ENCODE measurements at regions of chr13 and their contacts with region 1.

Region 1: GRCh38 chr13:41132512-41133152 is at the start of gene KBTBD6:
- DNase-seq: peak; percentile 97
- H3K4me3 ChIP-seq: peak within 1 kb of the TSS; percentile 84
- H3K27ac ChIP-seq: peak within 1 kb of the TSS; percentile 36
- H3K4me1 ChIP-seq: peaks cover 39% of the 10 kb centered on the region
- CTCF ChIP-seq: no peak
- total RNA-seq, gene KBTBD6: 11.1 and 11.6 TPM in 2 replicates

Region 2: DNA sequence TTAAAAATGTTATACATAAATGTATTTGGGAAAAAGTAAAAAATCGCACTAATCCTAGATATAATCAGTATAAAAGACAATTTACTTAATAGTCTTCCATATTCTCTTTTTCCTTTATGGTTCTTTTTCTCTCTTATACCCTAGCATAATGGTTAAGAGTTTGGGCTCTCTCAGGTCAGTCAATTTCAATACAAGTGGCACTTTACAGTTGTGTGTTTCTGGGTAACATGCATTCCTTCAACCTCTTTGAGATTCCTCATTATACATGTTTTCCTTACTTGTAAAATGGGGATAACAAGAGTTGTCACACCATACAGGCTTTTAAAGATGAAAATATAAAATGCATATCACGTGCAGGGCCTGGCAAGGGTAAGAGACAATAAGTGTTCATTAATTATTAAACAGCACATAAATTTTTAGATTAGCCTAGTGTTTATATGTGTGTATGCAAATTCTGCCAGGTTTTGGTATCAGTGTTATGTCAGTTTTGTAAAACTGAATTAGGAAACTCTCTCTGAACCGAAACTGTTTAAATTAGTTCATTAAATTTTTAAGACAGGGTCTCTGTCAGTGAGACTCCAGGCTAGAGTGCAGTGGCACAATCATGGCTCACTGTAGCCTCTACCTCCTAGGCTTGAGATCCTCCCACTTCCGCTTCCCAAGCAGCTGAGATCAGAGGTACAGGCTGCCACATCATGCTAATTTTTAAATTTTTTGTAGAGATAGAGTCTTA is 163.3 kb before region 1 on chr13:
- CTCF ChIA-PET with region 1: no interaction called
- POLR2A ChIA-PET with region 1: no interaction called
- intact Hi-C with region 1: no loop called
- DNase-seq: peak; percentile 50
- H3K4me3 ChIP-seq: peak overlapping the region; percentile 85
- H3K27ac ChIP-seq: peak overlapping the region; percentile 32
- H3K4me1 ChIP-seq: peaks cover 100% of the 10 kb centered on the region
- CTCF ChIP-seq: no peak

Region 3: GRCh38 chr13:41193919-41194824 is 61.5 kb after region 1 on chr13 and contains the start of gene KBTBD7:
- CTCF ChIA-PET with region 1: no interaction called
- POLR2A ChIA-PET with region 1: no interaction called
- intact Hi-C with region 1: loop called (anchors 1 kb)
- DNase-seq: peak; percentile 87
- H3K4me3 ChIP-seq: peak within 1 kb of the TSS; percentile 70
- H3K27ac ChIP-seq: no peak within 1 kb of the TSS
- H3K4me1 ChIP-seq: peaks cover 5% of the 10 kb centered on the region
- CTCF ChIP-seq: no peak
- total RNA-seq, gene KBTBD7: 4.8 and 6.5 TPM in 2 replicates

Region 4: GRCh38 chr13:41263261-41264027 is 130.8 kb after region 1 on chr13 and contains the start of gene MTRF1:
- CTCF ChIA-PET with region 1: no interaction called
- POLR2A ChIA-PET with region 1: interaction called, 3 read pairs
- intact Hi-C with region 1: loop called (anchors 5 kb)
- DNase-seq: peak; percentile 89
- H3K4me3 ChIP-seq: peak within 1 kb of the TSS; percentile 80
- H3K27ac ChIP-seq: peak within 1 kb of the TSS; percentile 60
- H3K4me1 ChIP-seq: peaks cover 7% of the 10 kb centered on the region
- CTCF ChIP-seq: no peak
- total RNA-seq, gene MTRF1: 22.1 and 24.9 TPM in 2 replicates

Region 5: DNA sequence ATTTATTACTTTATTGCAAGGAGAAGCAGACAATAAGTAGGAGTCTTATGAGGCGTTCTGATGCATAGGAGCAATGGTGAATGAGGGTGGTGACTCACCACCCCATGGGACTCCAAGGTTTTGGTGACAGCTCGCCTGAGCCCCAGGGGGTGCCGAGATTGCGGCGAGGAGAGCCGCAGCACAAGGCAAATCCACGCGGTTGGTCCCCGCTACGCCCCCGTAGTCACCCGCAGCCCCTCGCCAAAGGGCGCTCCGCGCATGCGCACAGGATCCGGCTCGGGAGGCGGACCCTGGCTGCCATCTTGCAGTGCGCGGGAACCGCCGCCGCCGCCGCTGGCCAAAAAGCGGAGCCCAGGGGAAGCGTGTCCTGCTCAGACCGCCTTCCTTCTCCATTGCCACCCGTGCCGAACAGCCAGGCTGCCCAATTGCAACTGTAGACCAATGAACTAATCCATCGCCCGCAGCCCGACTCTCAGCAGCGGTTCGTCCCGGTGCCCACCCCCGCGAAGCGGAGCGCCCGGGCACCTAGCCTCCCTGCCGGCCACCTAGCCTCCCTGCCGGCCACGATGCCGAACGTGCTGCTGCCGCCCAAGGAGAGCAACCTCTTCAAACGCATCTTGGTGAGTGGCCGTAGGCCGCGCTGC is 178.5 kb after region 1 on chr13 and contains the start of gene NAA16:
- CTCF ChIA-PET with region 1: interaction called, 4 read pairs
- POLR2A ChIA-PET with region 1: no interaction called
- intact Hi-C with region 1: loop called (anchors 5 kb)
- DNase-seq: peak; percentile 93
- H3K4me3 ChIP-seq: peak within 1 kb of the TSS; percentile 79
- H3K27ac ChIP-seq: peak within 1 kb of the TSS; percentile 74
- H3K4me1 ChIP-seq: peaks cover 37% of the 10 kb centered on the region
- CTCF ChIP-seq: 0 out of 2 replicates have a peak, but pooled peaks have one; percentile 1
- total RNA-seq, gene NAA16: 22.1 and 22.4 TPM in 2 replicates

Region 6: DNA sequence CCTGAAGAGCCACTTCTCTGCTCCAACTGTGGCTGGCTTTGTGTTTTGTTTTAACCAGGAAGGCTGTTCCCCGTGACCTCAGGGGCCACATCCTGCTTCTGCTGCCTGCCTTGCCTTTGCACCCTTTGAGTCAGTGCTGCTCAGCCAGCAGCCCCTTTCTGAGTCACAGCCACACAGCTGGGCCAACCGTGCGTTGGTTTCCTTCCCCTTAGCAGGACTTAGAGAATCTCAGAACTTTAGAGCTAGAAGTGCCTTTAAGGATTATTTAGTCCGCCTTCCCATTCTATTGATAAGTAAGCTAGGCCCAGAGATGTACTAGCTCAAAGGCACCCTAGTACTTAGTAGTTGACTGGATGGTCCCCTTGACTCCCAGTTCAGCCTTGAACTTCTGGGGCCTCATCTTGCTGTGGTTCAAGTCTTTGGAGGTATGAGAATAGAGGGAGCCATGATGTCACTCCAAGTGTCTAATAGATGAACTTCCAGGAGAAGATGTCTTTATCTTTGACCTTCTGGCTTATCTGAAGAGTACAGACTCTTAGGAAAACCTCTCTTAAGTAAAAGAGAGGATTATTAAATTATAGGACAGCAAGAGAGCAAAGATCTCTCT is 332.7 kb after region 1 on chr13:
- CTCF ChIA-PET with region 1: no interaction called
- POLR2A ChIA-PET with region 1: no interaction called
- intact Hi-C with region 1: loop called (anchors 5 kb)
- DNase-seq: peak; percentile 94
- H3K4me3 ChIP-seq: peak overlapping the region; percentile 85
- H3K27ac ChIP-seq: peak overlapping the region; percentile 95
- H3K4me1 ChIP-seq: peaks cover 71% of the 10 kb centered on the region
- CTCF ChIP-seq: no peak

Measured in OCI-LY7 (cell line).